Activated CD8-positive, alpha-beta memory T cell treated with anti-CD3 and anti-CD28 coated beads, Interleukin-2, amount 10 ng/mL, durations not matched to agents 7 days and 5 days (primary cell): ENCODE measurements at regions of chr9 and their contacts with region 1.

Region 1: GRCh38 chr9:114385412-114386181 is 2.2 kb downstream of the AKNA start:
- DNase-seq: peak; percentile 97
- ATAC-seq: peak; percentile 83
- H3K4me3 Mint-ChIP-seq: peak overlapping the region; percentile 100
- H3K27ac Mint-ChIP-seq: peak overlapping the region; percentile 96
- H3K4me1 Mint-ChIP-seq: peaks cover 52% of the 10 kb centered on the region
- H3K27me3 Mint-ChIP-seq: no peaks in the 10 kb centered on the region

Region 2: DNA sequence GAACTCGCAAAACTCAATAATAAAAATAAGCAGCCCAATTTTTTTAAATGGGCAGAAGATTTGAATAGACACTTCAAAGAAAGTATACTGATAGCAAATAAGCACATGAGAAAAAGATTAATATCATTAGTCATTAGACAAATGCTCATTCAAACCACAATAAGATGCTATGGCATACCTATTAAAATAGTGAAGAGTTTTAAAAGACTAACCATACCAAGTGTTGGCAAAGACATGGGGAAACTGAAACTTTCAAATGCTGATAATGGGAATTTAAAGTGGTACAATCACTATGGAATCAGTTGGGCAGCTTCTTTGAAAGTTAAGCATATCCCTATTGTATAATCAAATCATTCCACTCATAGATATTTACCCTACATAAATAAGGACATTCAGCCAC is 89.3 kb before region 1 on chr9:
- CTCF ChIA-PET with region 1: no interaction called
- DNase-seq: no peak
- ATAC-seq: no peak
- H3K4me3 Mint-ChIP-seq: no peak overlapping the region
- H3K27ac Mint-ChIP-seq: no peak overlapping the region
- H3K4me1 Mint-ChIP-seq: no peaks in the 10 kb centered on the region
- H3K27me3 Mint-ChIP-seq: peaks cover 32% of the 10 kb centered on the region

Region 3: GRCh38 chr9:114339130-114339908 is 46.3 kb before region 1 on chr9:
- CTCF ChIA-PET with region 1: interaction called, 55 read pairs
- DNase-seq: peak; percentile 61
- ATAC-seq: peak; percentile 63
- H3K4me3 Mint-ChIP-seq: no peak overlapping the region
- H3K27ac Mint-ChIP-seq: peak overlapping the region; percentile 36
- H3K4me1 Mint-ChIP-seq: peaks cover 19% of the 10 kb centered on the region
- H3K27me3 Mint-ChIP-seq: no peaks in the 10 kb centered on the region

Region 4: DNA sequence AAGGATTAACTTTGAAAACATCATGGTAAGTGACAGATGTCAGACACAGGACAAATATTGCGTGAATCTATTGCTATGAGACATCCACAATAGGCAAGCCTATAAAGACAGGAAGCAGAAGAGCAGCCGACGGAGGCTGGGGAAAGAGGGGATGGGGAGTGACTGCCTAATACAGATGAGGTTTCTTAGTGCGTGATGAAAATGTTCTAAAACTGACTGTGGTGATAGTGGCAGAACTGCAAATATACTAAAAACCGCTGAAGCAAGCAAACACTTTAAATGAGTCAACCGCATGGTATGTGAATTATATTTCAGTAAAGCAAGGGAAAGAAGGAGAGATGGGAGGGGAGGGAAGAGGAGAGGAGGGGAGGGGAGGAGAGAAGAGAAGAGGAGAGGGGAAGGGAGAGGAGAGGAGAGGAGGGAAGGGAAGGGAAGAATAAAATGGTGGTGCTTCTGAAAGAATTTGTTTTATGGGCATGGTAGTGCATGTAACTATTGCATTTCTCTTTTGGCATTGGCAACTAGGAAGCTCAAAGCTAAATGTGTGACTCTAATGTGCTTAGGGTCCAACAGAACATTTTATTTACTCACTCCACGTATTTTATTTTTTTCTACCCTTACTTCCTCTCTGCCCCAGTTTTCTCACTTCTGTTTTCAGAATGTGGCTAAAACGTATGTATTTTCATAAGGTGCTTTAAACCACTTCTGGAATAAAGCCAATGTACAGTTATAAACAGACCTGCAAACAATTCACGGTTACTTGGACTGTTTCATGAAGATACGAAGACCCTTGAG is 19.1 kb before region 1 on chr9:
- CTCF ChIA-PET with region 1: interaction called, 135 read pairs
- DNase-seq: peak; percentile 72
- ATAC-seq: peak; percentile 61
- H3K4me3 Mint-ChIP-seq: peak overlapping the region; percentile 50
- H3K27ac Mint-ChIP-seq: peak overlapping the region; percentile 89
- H3K4me1 Mint-ChIP-seq: peaks cover 91% of the 10 kb centered on the region
- H3K27me3 Mint-ChIP-seq: no peaks in the 10 kb centered on the region

Region 5: GRCh38 chr9:114372921-114373448 is 12.6 kb before region 1 on chr9:
- CTCF ChIA-PET with region 1: interaction called, 135 read pairs
- DNase-seq: peak; percentile 96
- ATAC-seq: peak; percentile 83
- H3K4me3 Mint-ChIP-seq: peak overlapping the region; percentile 73
- H3K27ac Mint-ChIP-seq: peak overlapping the region; percentile 93
- H3K4me1 Mint-ChIP-seq: peaks cover 93% of the 10 kb centered on the region
- H3K27me3 Mint-ChIP-seq: no peaks in the 10 kb centered on the region

Region 6: GRCh38 chr9:114397848-114398605 is 12.4 kb after region 1 on chr9:
- CTCF ChIA-PET with region 1: interaction called, 29 read pairs
- DNase-seq: peak; percentile 97
- ATAC-seq: peak; percentile 93
- H3K4me3 Mint-ChIP-seq: peak overlapping the region; percentile 99
- H3K27ac Mint-ChIP-seq: peak overlapping the region; percentile 79
- H3K4me1 Mint-ChIP-seq: peaks cover 40% of the 10 kb centered on the region
- H3K27me3 Mint-ChIP-seq: no peaks in the 10 kb centered on the region

Region 7: DNA sequence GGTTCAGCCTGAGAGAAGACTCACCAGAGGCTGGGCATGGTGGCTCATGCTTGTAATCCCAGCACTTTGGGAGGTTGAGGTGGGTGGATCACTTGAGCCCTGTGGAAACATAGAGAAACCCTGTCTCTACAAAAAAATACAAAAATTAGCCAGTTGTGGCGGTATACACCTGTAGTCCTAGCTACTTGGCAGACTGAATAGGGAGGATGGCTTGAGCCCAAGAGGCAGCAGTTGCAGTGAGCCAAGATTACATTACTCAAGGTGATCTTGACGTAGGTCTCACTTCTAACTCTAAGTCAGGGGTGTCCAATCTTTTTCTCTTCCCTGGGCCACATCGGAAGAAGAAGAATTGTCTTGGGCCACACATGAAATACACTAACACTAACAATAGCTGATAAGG is 185.8 kb after region 1 on chr9:
- CTCF ChIA-PET with region 1: no interaction called
- DNase-seq: no peak
- ATAC-seq: no peak
- H3K4me3 Mint-ChIP-seq: no peak overlapping the region
- H3K27ac Mint-ChIP-seq: no peak overlapping the region
- H3K4me1 Mint-ChIP-seq: peaks cover 1% of the 10 kb centered on the region
- H3K27me3 Mint-ChIP-seq: peaks cover 2% of the 10 kb centered on the region